ENCODE measurements at regions of chr5 and their contacts with region 1.

Region 1: DNA sequence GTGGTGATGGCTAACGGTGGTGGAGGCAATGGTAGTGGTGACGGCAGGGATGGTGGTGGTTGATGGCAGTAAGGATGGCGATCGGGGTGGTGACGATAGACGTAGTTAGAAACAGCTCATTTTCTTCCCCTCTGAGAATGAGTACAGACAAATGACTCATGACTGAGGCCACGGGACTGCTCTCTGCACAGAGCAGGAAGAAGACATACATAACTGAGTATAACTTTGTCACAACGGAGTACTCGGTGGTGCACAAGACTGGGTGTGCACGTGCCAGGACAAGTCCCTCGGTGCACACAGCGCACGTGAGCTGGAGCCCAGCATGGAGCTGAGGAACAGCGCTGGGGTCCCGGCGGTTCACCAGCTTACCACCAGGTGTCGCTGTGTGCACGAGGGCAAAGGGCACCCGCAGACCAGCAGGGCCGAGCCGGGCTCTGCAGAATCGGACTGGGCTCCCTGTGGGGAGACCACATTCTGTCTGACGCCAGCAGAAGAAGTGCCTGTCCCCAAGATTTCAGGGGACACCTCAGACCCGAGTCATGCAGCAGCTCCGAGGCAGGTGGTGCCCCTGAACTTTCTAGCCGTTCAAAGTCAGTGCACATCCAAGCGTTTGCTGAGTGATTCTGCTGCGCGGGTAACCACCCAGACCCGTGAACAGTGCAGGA is 188.6 kb downstream of the FSTL4 start:
- DNase-seq: peak; percentile 87
- H3K4me3 ChIP-seq: no peak overlapping the region
- H3K27ac ChIP-seq: no peak overlapping the region
- H3K4me1 ChIP-seq: no peaks in the 10 kb centered on the region; a peak in 1 of 4 replicates
- H3K27me3 ChIP-seq: no peaks in the 10 kb centered on the region; the same call in 1 of the 2 replicates
- CTCF ChIP-seq: peak; percentile 82
- EP300 ChIP-seq: no peak
- RAD21 ChIP-seq: peak; percentile 85

Region 2: GRCh38 chr5:133111299-133111698 is 312.5 kb before region 1 on chr5:
- CTCF ChIA-PET with region 1: interaction called, 12 read pairs
- POLR2A ChIA-PET with region 1: no interaction called
- DNase-seq: peak; percentile 79
- H3K4me3 ChIP-seq: no peak overlapping the region; a peak in 1 of 4 replicates
- H3K27ac ChIP-seq: no peak overlapping the region
- H3K4me1 ChIP-seq: peaks cover 0 to 24% of the 10 kb centered on the region in 2 experiments; a peak in 1 of 4 replicates
- H3K27me3 ChIP-seq: no peaks in the 10 kb centered on the region
- CTCF ChIP-seq: peak; percentile 97
- EP300 ChIP-seq: no peak
- RAD21 ChIP-seq: peak; percentile 99

Region 3: GRCh38 chr5:133384120-133384855 is 39.5 kb before region 1 on chr5:
- CTCF ChIA-PET with region 1: no interaction called
- POLR2A ChIA-PET with region 1: no interaction called
- DNase-seq: no peak
- H3K4me3 ChIP-seq: no peak overlapping the region
- H3K27ac ChIP-seq: no peak overlapping the region
- H3K4me1 ChIP-seq: no peaks in the 10 kb centered on the region
- H3K27me3 ChIP-seq: no peaks in the 10 kb centered on the region; the same call in none of the 2 replicates
- CTCF ChIP-seq: no peak
- EP300 ChIP-seq: no peak
- RAD21 ChIP-seq: no peak

Region 4: DNA sequence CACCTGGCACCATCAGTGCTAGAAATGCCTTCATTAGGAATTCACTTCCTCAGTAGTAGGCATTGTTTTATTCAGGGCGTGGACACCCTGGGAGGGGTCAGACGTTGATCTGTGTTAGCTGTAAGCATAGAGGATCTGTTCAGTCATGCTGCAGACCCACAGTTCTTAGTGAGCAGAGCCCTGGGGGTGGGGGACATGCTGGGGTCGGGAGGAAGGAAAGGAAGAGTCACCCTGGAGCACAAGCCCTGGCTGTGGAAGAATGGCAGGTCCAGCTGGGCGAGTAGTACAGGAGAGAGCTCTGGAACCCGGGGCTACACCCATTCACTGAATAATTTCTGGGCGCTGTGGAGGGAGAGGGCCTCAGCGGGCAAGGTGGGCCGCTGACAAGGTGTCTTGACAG is 16.1 kb after region 1 on chr5:
- CTCF ChIA-PET with region 1: interaction called, 45 read pairs
- POLR2A ChIA-PET with region 1: no interaction called
- DNase-seq: no peak
- H3K4me3 ChIP-seq: no peak overlapping the region
- H3K27ac ChIP-seq: no peak overlapping the region
- H3K4me1 ChIP-seq: no peaks in the 10 kb centered on the region
- H3K27me3 ChIP-seq: peaks cover 6% of the 10 kb centered on the region; the same call in 1 of the 2 replicates
- CTCF ChIP-seq: no peak
- EP300 ChIP-seq: no peak
- RAD21 ChIP-seq: no peak

Region 5: GRCh38 chr5:133494917-133495233 is 71.1 kb after region 1 on chr5:
- CTCF ChIA-PET with region 1: interaction called, 11 read pairs
- POLR2A ChIA-PET with region 1: no interaction called
- DNase-seq: no peak
- H3K4me3 ChIP-seq: no peak overlapping the region
- H3K27ac ChIP-seq: no peak overlapping the region
- H3K4me1 ChIP-seq: peaks cover 0 to 7% of the 10 kb centered on the region in 2 experiments; a peak in 1 of 4 replicates
- H3K27me3 ChIP-seq: no peaks in the 10 kb centered on the region; the same call in 1 of the 2 replicates
- CTCF ChIP-seq: no peak
- EP300 ChIP-seq: no peak
- RAD21 ChIP-seq: no peak

Region 6: DNA sequence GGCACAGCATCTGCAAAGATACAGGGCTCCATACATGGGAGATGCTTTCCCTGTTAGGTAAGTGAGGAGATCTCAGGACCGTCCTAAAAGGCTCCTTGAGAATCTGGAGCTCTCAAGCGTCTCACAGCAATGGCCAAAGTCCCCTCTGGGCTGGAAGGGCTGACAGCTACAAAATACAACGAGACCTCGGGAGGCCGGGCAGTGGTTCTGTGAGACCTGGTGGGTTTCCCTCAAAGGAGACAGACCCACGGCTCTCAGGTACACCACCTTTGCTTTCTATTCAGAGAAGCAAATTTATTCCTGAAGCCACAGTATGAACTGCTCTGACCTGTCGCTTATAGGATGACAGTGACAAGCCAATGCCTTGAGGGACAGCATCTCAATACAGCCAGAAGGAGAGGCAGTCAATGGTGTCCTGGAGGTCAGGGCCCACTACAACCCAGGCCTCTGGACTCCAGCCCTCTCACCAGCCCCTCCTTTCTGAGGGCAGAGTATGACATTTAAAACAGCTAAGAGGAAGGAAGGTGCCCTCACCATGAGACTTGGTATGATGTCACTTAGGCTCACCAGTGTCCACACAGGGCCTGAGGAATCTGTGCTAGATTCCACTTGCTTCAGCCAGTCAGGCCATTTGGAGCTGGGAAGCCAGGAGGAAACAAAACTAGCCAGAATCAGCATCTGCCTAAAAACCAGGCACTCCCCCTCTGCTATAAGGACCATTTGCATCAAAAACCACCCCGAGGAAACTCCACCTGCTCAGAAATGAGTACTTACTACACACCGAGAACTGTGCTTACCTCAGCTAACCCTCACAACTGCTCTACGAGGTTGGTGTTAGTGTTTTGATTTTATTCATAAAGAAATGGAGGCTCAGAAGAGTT is 275.1 kb after region 1 on chr5:
- CTCF ChIA-PET with region 1: interaction called, 37 read pairs
- POLR2A ChIA-PET with region 1: no interaction called
- DNase-seq: no peak
- H3K4me3 ChIP-seq: no peak overlapping the region
- H3K27ac ChIP-seq: no peak overlapping the region
- H3K4me1 ChIP-seq: peaks cover 0 to 32% of the 10 kb centered on the region in 2 experiments; a peak in 2 of 4 replicates
- H3K27me3 ChIP-seq: no peaks in the 10 kb centered on the region
- CTCF ChIP-seq: no peak
- EP300 ChIP-seq: no peak
- RAD21 ChIP-seq: no peak

Region 7: GRCh38 chr5:133868946-133869518 is 445.3 kb after region 1 on chr5:
- CTCF ChIA-PET with region 1: interaction called, 137 read pairs
- POLR2A ChIA-PET with region 1: no interaction called
- DNase-seq: peak; percentile 77
- H3K4me3 ChIP-seq: no peak overlapping the region
- H3K27ac ChIP-seq: no peak overlapping the region
- H3K4me1 ChIP-seq: peaks cover 16 to 28% of the 10 kb centered on the region in 2 experiments; a peak in 3 of 4 replicates
- H3K27me3 ChIP-seq: peaks cover 10% of the 10 kb centered on the region; the same call in 1 of the 2 replicates
- CTCF ChIP-seq: peak; percentile 83
- EP300 ChIP-seq: no peak
- RAD21 ChIP-seq: peak; percentile 90

Measured in SK-N-SH (cell line).